Activated naive CD4-positive, alpha-beta T cell treated with anti-CD3 and anti-CD28 coated beads for 36 hours (primary cell): ENCODE measurements at regions of chr2 and their contacts with region 1.

Region 1: DNA sequence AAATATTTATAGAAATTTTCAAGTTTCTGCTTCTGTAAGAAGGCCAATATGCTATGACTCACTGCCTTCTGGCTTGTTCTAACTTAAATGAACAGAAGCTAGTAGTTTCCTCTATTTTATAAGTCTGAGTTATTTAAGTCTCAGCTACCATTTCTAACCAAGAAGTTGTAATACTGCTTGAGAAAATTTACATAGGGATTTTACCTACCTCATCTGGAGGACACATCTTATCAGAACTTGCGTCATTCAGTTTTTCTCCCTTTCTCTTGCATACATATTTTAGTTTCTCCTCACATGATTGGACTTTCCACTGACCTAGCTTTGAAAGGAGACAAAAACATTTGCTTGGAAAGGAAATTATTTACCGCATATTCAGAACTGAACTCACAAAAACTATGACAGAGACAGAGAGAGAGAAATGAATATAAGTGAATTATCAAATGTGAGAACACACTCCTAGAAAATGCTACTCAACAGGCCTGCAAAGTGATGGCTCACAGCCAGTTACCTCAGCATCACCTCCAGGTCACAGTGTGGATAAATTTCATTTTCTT is 81.1 kb upstream of the CD302 start:
- DNase-seq: peak; percentile 76
- H3K4me3 Mint-ChIP-seq: no peak overlapping the region
- H3K27ac Mint-ChIP-seq: peak overlapping the region; percentile 77
- H3K4me1 Mint-ChIP-seq: peaks cover 45% of the 10 kb centered on the region
- H3K27me3 Mint-ChIP-seq: no peaks in the 10 kb centered on the region

Region 2: GRCh38 chr2:159214321-159214865 is 664.7 kb before region 1 on chr2:
- CTCF ChIA-PET with region 1: no interaction called
- intact Hi-C with region 1: no loop called
- DNase-seq: no peak
- H3K4me3 Mint-ChIP-seq: no peak overlapping the region
- H3K27ac Mint-ChIP-seq: no peak overlapping the region
- H3K4me1 Mint-ChIP-seq: peaks cover 14% of the 10 kb centered on the region
- H3K27me3 Mint-ChIP-seq: no peaks in the 10 kb centered on the region

Region 3: DNA sequence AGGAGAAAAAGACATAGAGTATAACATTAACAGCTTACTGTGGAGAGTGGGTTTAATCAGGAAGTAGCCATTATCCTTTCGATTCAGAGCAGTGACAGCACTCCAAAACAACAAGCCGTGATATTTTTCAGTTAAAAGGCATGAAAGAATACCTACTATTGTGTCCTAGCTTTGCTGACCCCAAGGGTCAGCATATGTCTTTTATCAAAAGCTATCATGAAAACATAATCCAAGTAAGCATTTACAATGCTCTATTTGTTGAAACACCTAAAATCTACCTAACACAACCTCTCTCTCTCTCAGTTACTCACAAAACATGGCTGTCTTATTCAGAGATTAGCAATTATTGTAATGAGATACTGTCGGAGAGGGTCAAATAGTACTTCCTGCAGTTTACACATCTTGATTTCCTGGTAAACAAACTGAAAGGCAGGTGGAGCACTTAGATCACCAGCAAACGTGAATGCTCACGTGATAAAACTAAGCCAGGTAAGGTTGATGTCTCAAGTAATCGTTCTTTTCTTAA is 362.8 kb before region 1 on chr2:
- CTCF ChIA-PET with region 1: no interaction called
- intact Hi-C with region 1: loop called (anchors 5 kb)
- DNase-seq: peak; percentile 23
- H3K4me3 Mint-ChIP-seq: peak overlapping the region; percentile 66
- H3K27ac Mint-ChIP-seq: peak overlapping the region; percentile 54
- H3K4me1 Mint-ChIP-seq: peaks cover 17% of the 10 kb centered on the region
- H3K27me3 Mint-ChIP-seq: no peaks in the 10 kb centered on the region

Region 4: GRCh38 chr2:159807183-159808031 is 71.7 kb before region 1 on chr2:
- CTCF ChIA-PET with region 1: no interaction called
- intact Hi-C with region 1: loop called (anchors 1 kb)
- DNase-seq: peak; percentile 43
- H3K4me3 Mint-ChIP-seq: no peak overlapping the region
- H3K27ac Mint-ChIP-seq: no peak overlapping the region
- H3K4me1 Mint-ChIP-seq: peaks cover 6% of the 10 kb centered on the region
- H3K27me3 Mint-ChIP-seq: no peaks in the 10 kb centered on the region

Region 5: GRCh38 chr2:159895258-159896065 is 16.3 kb after region 1 on chr2:
- CTCF ChIA-PET with region 1: interaction called, 6 read pairs
- intact Hi-C with region 1: loop called (anchors 1 kb)
- DNase-seq: peak; percentile 66
- H3K4me3 Mint-ChIP-seq: no peak overlapping the region
- H3K27ac Mint-ChIP-seq: peak overlapping the region; percentile 84
- H3K4me1 Mint-ChIP-seq: peaks cover 91% of the 10 kb centered on the region
- H3K27me3 Mint-ChIP-seq: no peaks in the 10 kb centered on the region

Region 6: GRCh38 chr2:159960383-159960782 is 81.3 kb after region 1 on chr2:
- CTCF ChIA-PET with region 1: no interaction called
- intact Hi-C with region 1: loop called (anchors 1 kb)
- DNase-seq: no peak
- H3K4me3 Mint-ChIP-seq: no peak overlapping the region
- H3K27ac Mint-ChIP-seq: no peak overlapping the region
- H3K4me1 Mint-ChIP-seq: peaks cover 18% of the 10 kb centered on the region
- H3K27me3 Mint-ChIP-seq: peaks cover 4% of the 10 kb centered on the region